ENCODE measurements at regions of chrX and their contacts with region 1.

Region 1: GRCh38 chrX:150577174-150577573 is 8.8 kb downstream of the MTM1 start:
- DNase-seq: no peak
- H3K4me3 ChIP-seq: no peak overlapping the region
- H3K27ac ChIP-seq: no peak overlapping the region
- H3K4me1 ChIP-seq: peaks cover 18% of the 10 kb centered on the region
- H3K27me3 ChIP-seq: no peaks in the 10 kb centered on the region
- CTCF ChIP-seq: no peak
- POLR2A ChIP-seq: no peak

Region 2: DNA sequence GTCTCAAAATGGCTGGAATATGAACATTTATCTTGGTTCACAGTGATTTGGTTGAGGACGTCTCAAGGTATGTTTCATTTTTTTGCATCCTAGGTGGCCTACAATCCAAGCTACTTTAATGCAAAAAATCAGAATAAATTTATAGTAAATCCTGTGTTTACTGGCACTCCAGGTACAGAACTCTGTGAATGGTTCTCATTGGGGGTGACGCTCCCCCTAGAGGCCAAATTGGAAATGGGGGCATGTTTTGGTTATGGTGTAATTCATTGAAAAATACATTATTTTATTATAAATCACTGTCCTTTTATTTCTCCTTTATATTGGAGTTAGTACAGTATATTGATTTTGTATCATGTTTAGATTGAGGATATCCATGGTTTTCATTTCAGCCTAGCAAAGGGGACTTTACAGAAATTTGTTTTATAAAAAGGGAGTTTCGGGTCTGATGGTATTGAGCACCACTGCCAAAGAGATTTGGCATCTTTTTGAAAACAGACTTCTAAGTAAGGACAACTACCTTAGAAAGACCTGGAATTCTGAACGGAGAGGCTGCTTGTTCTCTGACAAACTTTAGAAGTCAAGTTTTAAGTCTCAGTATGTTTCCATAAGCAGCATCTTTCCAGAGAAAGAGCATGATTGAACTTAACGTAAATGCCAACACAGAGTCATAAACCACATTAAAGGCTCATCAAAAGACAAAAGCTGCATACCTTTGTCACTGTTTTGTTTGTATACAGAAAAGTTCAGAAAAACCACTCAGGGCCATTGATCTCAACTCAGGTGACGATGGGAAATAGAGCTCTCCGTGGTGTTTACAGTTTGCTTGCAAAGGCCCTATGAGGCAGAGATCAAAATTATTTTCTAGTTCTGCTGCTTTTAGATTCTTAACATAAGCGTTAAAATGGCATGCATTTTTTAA is 10.7 kb after region 1 on chrX:
- intact Hi-C with region 1: loop called (anchors 1 kb)
- DNase-seq: no peak
- H3K4me3 ChIP-seq: no peak overlapping the region
- H3K27ac ChIP-seq: no peak overlapping the region
- H3K4me1 ChIP-seq: no peaks in the 10 kb centered on the region
- H3K27me3 ChIP-seq: no peaks in the 10 kb centered on the region
- CTCF ChIP-seq: peak in 1 of 3 experiments; percentile 39
- POLR2A ChIP-seq: no peak